B cell (primary cell): ENCODE measurements at regions of chr7 and their contacts with region 1.

Region 1: DNA sequence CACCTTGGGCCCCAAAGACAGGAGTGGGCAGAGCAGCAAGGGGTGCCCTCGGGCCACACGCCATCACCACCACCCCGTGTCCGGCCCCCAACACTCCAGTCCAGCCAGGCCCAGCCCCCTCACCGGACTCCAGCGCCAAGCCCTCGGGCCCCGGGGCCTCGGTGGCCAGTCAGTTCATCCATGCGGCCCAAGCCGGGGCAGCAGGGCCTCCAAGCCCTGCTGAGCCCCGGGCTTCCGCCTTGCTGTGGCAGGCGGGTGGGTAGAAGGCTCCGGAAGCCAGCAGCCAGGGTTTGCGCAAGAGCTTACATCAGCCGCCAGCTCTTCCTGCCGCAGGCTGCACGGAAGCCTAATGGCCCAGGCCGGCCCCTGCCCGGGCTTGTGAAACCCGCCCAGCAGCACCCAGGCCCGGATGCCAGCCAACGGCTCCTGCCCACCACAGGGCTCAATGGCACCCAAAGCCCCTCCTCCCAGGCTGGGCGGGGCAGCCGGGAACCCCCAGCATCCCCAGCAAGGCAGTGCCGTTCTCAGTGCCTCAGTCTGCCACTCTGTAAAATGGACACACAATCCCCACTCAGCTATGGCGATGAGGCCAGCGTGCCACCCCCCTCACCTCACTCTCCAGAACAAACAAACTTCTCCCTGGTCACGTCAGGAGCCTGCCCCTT is 26.5 kb downstream of the TNRC18 start:
- DNase-seq: peak; percentile 96
- ATAC-seq: peak; percentile 94
- H3K4me3 ChIP-seq: peak overlapping the region; percentile 70 to 87 (median 79)
- H3K4me3 Mint-ChIP-seq: peak overlapping the region; percentile 86
- H3K27ac ChIP-seq: peak overlapping the region; percentile 81 to 96
- H3K27ac Mint-ChIP-seq: peak overlapping the region; percentile 89
- H3K4me1 ChIP-seq: peaks cover 19 to 33% of the 10 kb centered on the region in 2 donors
- H3K4me1 Mint-ChIP-seq: peaks cover 27% of the 10 kb centered on the region
- H3K27me3 ChIP-seq: no peaks in the 10 kb centered on the region
- H3K27me3 Mint-ChIP-seq: no peaks in the 10 kb centered on the region
- CTCF ChIP-seq: no peak

Region 2: GRCh38 chr7:5231811-5232484 is 165.2 kb before region 1 on chr7:
- CTCF ChIA-PET with region 1: interaction called, 3 read pairs
- POLR2A ChIA-PET with region 1: interaction called, 5 read pairs
- intact Hi-C with region 1: loop called (anchors 2 kb)
- DNase-seq: peak; percentile 88
- ATAC-seq: peak; percentile 67
- H3K4me3 ChIP-seq: peak overlapping the region in 4 of 5 experiments; percentile 24 to 46 (median 38)
- H3K4me3 Mint-ChIP-seq: peak overlapping the region; percentile 82
- H3K27ac ChIP-seq: peak overlapping the region; percentile 96 to 97
- H3K27ac Mint-ChIP-seq: peak overlapping the region; percentile 91
- H3K4me1 ChIP-seq: peaks cover 71 to 75% of the 10 kb centered on the region in 2 donors
- H3K4me1 Mint-ChIP-seq: peaks cover 71% of the 10 kb centered on the region
- H3K27me3 ChIP-seq: peaks cover 0 to 2% (median 0%) of the 10 kb centered on the region in 4 experiments
- H3K27me3 Mint-ChIP-seq: no peaks in the 10 kb centered on the region
- CTCF ChIP-seq: no peak

Region 3: GRCh38 chr7:5423844-5424688 is 26.9 kb after region 1 on chr7:
- CTCF ChIA-PET with region 1: interaction called, 11 read pairs
- POLR2A ChIA-PET with region 1: interaction called, 17 read pairs
- intact Hi-C with region 1: loop called (anchors 1 kb)
- DNase-seq: peak; percentile 82
- ATAC-seq: peak; percentile 59
- H3K4me3 ChIP-seq: peak overlapping the region; percentile 21 to 70 (median 52)
- H3K4me3 Mint-ChIP-seq: peak overlapping the region; percentile 84
- H3K27ac ChIP-seq: no peak overlapping the region
- H3K27ac Mint-ChIP-seq: peak overlapping the region; percentile 69
- H3K4me1 ChIP-seq: peaks cover 92 to 94% of the 10 kb centered on the region in 2 donors
- H3K4me1 Mint-ChIP-seq: peaks cover 56% of the 10 kb centered on the region
- H3K27me3 ChIP-seq: peaks cover 0 to 93% (median 64%) of the 10 kb centered on the region in 4 experiments
- H3K27me3 Mint-ChIP-seq: peaks cover 29% of the 10 kb centered on the region
- CTCF ChIP-seq: no peak

Region 4: GRCh38 chr7:5477723-5478531 is 80.8 kb after region 1 on chr7:
- CTCF ChIA-PET with region 1: interaction called, 3 read pairs
- POLR2A ChIA-PET with region 1: no interaction called
- intact Hi-C with region 1: loop called (anchors 2 kb)
- DNase-seq: peak; percentile 68
- ATAC-seq: peak; percentile 96
- H3K4me3 ChIP-seq: peak overlapping the region; percentile 30 to 69 (median 54)
- H3K4me3 Mint-ChIP-seq: peak overlapping the region; percentile 94
- H3K27ac ChIP-seq: no peak overlapping the region
- H3K27ac Mint-ChIP-seq: peak overlapping the region; percentile 76
- H3K4me1 ChIP-seq: peaks cover 9 to 13% of the 10 kb centered on the region in 2 donors
- H3K4me1 Mint-ChIP-seq: peaks cover 11% of the 10 kb centered on the region
- H3K27me3 ChIP-seq: no peaks in the 10 kb centered on the region
- H3K27me3 Mint-ChIP-seq: no peaks in the 10 kb centered on the region
- CTCF ChIP-seq: peak; percentile 38

Region 5: GRCh38 chr7:5580714-5581395 is 183.7 kb after region 1 on chr7:
- CTCF ChIA-PET with region 1: no interaction called
- POLR2A ChIA-PET with region 1: interaction called, 11 read pairs
- intact Hi-C with region 1: no loop called
- DNase-seq: no peak
- ATAC-seq: no peak
- H3K4me3 ChIP-seq: no peak overlapping the region
- H3K4me3 Mint-ChIP-seq: no peak overlapping the region
- H3K27ac ChIP-seq: no peak overlapping the region
- H3K27ac Mint-ChIP-seq: no peak overlapping the region
- H3K4me1 ChIP-seq: no peaks in the 10 kb centered on the region
- H3K4me1 Mint-ChIP-seq: peaks cover 6% of the 10 kb centered on the region
- H3K27me3 ChIP-seq: peaks cover 0 to 17% (median 0%) of the 10 kb centered on the region in 4 experiments
- H3K27me3 Mint-ChIP-seq: peaks cover 17% of the 10 kb centered on the region
- CTCF ChIP-seq: no peak

Region 6: DNA sequence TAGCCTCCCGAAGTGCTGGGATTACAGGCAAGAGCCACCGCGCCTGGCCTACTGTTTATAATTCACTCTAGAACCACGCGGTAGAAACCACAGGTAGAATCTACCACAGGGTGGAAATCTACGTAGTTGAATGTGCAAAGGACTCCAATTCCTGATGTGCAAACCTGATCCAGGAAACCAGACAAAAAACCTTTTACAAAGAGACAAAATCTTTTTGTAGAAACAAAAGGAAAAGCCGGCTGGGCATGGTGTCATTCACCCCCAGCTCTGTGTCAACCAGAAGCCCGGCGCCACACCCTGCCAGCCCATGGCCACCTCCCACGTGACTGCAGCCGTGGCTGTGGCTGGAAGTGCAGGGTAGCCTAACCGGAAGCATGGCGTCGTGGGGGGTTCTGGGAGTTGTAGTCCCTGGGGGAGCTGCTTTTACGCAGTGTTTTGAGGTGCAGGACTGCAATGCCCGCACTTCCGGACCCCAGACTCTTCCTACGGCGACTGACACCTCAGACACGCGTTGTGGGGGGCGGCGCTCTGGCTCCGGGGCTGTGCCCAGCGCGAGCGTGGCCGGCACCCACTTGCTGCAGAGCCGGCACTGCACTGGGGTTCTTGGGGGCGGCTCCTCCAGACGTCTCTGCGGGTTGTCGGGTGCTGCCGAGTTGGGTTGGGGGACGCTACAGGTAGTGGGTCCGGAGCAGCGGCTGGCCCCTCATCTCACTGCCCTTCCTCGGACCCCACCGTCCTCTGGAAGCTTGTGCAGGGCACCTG is 425.8 kb after region 1 on chr7:
- CTCF ChIA-PET with region 1: no interaction called
- POLR2A ChIA-PET with region 1: no interaction called
- intact Hi-C with region 1: loop called (anchors 5 kb)
- DNase-seq: peak; percentile 95
- ATAC-seq: peak; percentile 99
- H3K4me3 ChIP-seq: peak overlapping the region; percentile 47 to 85 (median 81)
- H3K4me3 Mint-ChIP-seq: peak overlapping the region; percentile 91
- H3K27ac ChIP-seq: peak overlapping the region; percentile 78 to 85
- H3K27ac Mint-ChIP-seq: peak overlapping the region; percentile 93
- H3K4me1 ChIP-seq: peaks cover 0 to 19% of the 10 kb centered on the region in 2 donors
- H3K4me1 Mint-ChIP-seq: peaks cover 18% of the 10 kb centered on the region
- H3K27me3 ChIP-seq: no peaks in the 10 kb centered on the region
- H3K27me3 Mint-ChIP-seq: no peaks in the 10 kb centered on the region
- CTCF ChIP-seq: no peak

Region 7: DNA sequence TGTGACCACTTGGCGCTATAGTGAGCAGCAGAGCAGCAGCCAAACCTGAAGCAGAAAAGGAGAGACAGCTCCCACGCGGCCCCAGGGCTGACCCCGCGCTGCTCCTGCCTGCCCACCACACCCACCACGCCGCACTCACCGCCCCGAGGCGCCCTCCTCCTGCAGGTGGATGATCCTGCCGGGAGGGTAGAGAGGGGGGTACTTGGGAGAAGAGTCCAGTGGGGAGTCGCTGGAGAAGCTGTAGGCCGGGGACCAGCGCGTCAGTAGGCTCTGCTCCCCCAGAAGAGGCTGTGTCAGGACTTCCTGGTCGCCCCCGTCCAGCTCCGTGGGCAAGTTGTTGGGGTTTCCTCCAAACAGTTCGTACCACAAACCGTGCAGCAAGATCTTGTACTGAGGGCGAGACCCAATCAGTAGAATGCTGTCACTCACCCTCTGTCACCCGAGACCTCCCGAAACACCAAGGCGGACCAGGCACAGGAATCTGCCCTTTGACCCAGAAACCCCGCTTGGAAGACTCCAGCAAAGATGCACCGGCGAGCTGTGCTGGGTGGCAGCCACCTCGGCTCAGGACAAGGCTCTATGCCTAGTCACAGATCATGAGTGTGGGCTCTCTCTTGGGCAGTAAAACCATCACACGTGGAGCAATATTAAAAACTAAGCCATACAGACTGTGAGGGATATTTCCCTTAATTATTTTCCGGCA is 1013.0 kb after region 1 on chr7:
- CTCF ChIA-PET with region 1: no interaction called
- POLR2A ChIA-PET with region 1: no interaction called
- intact Hi-C with region 1: no loop called
- DNase-seq: no peak
- ATAC-seq: no peak
- H3K4me3 ChIP-seq: no peak overlapping the region
- H3K4me3 Mint-ChIP-seq: no peak overlapping the region
- H3K27ac ChIP-seq: no peak overlapping the region
- H3K27ac Mint-ChIP-seq: no peak overlapping the region
- H3K4me1 ChIP-seq: no peaks in the 10 kb centered on the region
- H3K4me1 Mint-ChIP-seq: no peaks in the 10 kb centered on the region
- H3K27me3 ChIP-seq: no peaks in the 10 kb centered on the region
- H3K27me3 Mint-ChIP-seq: no peaks in the 10 kb centered on the region
- CTCF ChIP-seq: no peak